HepG2 (cell line): ENCODE measurements at regions of chrX and their contacts with region 1.

Region 1: GRCh38 chrX:75156021-75156945 is at the start of gene ABCB7:
- DNase-seq: peak; percentile 65
- ATAC-seq: peak; percentile 98
- H3K4me3 ChIP-seq: peak within 1 kb of the TSS; percentile 75 to 81 (median 77)
- H3K27ac ChIP-seq: peak within 1 kb of the TSS; percentile 82
- H3K4me1 ChIP-seq: peaks cover 7% of the 10 kb centered on the region; the same call in 1 of the 2 replicates
- H3K27me3 ChIP-seq: no peaks in the 10 kb centered on the region; a peak in 1 of 5 replicates
- CTCF ChIP-seq: peak; percentile 26
- EP300 ChIP-seq: no peak
- POLR2A ChIP-seq: peak; percentile 30 to 53; a peak in 3 of 4 replicates
- RAD21 ChIP-seq: no peak
- total RNA-seq, gene ABCB7: 27.7 and 29.9 TPM in 2 replicates

Region 2: DNA sequence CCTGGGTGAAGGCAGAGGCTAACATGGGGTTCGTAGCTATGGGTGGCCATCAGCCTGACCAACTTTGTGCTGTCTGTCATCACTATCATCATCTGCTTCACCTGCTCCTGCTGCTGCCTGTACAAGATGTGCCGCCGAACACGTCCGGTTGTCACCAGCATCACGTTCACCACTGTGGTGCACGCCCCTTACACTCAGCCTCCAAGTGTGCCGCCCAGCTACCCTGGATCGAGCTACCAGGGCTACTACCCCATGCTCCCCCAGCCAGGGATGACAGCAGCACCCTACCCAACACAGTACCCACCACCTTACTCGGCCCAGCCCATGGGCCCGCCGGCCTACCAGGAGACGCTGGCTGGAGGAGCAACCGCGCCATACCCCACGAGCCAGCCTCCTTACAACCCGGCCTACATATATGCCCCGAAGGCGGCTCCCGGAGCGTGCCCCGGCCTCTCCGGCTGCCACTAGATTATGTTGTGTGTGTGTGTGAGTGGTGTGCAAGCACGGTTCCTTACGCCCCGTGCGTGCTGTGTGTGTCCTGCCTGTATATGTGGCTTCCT is 1090.4 kb before region 1 on chrX:
- CTCF ChIA-PET with region 1: no interaction called
- POLR2A ChIA-PET with region 1: no interaction called
- in situ Hi-C with region 1: no loop called
- intact Hi-C with region 1: no loop called
- DNase-seq: no peak
- ATAC-seq: no peak
- H3K4me3 ChIP-seq: no peak overlapping the region
- H3K27ac ChIP-seq: no peak overlapping the region
- H3K4me1 ChIP-seq: no peaks in the 10 kb centered on the region
- H3K27me3 ChIP-seq: no peaks in the 10 kb centered on the region
- CTCF ChIP-seq: no peak
- EP300 ChIP-seq: no peak
- POLR2A ChIP-seq: no peak
- RAD21 ChIP-seq: no peak

Region 3: GRCh38 chrX:74949717-74950116 is 206.6 kb before region 1 on chrX:
- CTCF ChIA-PET with region 1: no interaction called
- POLR2A ChIA-PET with region 1: no interaction called
- in situ Hi-C with region 1: no loop called
- intact Hi-C with region 1: no loop called
- DNase-seq: no peak
- ATAC-seq: no peak
- H3K4me3 ChIP-seq: no peak overlapping the region
- H3K27ac ChIP-seq: no peak overlapping the region
- H3K4me1 ChIP-seq: no peaks in the 10 kb centered on the region
- H3K27me3 ChIP-seq: no peaks in the 10 kb centered on the region
- CTCF ChIP-seq: no peak
- EP300 ChIP-seq: no peak
- POLR2A ChIP-seq: no peak
- RAD21 ChIP-seq: no peak

Region 4: GRCh38 chrX:75061701-75062100 is 94.6 kb before region 1 on chrX:
- CTCF ChIA-PET with region 1: no interaction called
- POLR2A ChIA-PET with region 1: no interaction called
- in situ Hi-C with region 1: no loop called
- intact Hi-C with region 1: no loop called
- DNase-seq: no peak
- ATAC-seq: no peak
- H3K4me3 ChIP-seq: no peak overlapping the region
- H3K27ac ChIP-seq: no peak overlapping the region
- H3K4me1 ChIP-seq: no peaks in the 10 kb centered on the region
- H3K27me3 ChIP-seq: no peaks in the 10 kb centered on the region
- CTCF ChIP-seq: no peak
- EP300 ChIP-seq: no peak
- POLR2A ChIP-seq: no peak
- RAD21 ChIP-seq: no peak

Region 5: GRCh38 chrX:75273483-75273882 is 117.2 kb after region 1 on chrX:
- CTCF ChIA-PET with region 1: no interaction called
- POLR2A ChIA-PET with region 1: no interaction called
- in situ Hi-C with region 1: no loop called
- intact Hi-C with region 1: loop called (anchors 5 kb)
- DNase-seq: no peak
- ATAC-seq: peak; percentile 47
- H3K4me3 ChIP-seq: peak overlapping the region; percentile 74 to 85 (median 84)
- H3K27ac ChIP-seq: peak overlapping the region; percentile 86
- H3K4me1 ChIP-seq: peaks cover 8% of the 10 kb centered on the region; the same call in 1 of the 2 replicates
- H3K27me3 ChIP-seq: no peaks in the 10 kb centered on the region; a peak in 1 of 5 replicates
- CTCF ChIP-seq: no peak
- EP300 ChIP-seq: no peak
- POLR2A ChIP-seq: no peak
- RAD21 ChIP-seq: no peak